ENCODE measurements at regions of chr11 and their contacts with region 1.

Region 1: GRCh38 chr11:30586251-30587144 is at the start of gene MPPED2:
- DNase-seq: peak; percentile 72 to 83
- ATAC-seq: peak; percentile 65
- H3K4me3 ChIP-seq: peak within 1 kb of the TSS; percentile 91 to 94
- H3K27ac ChIP-seq: peak within 1 kb of the TSS; percentile 78 to 90
- H3K4me1 ChIP-seq: no peaks in the 10 kb centered on the region
- H3K27me3 ChIP-seq: no peaks in the 10 kb centered on the region
- total RNA-seq, gene MPPED2: 7.5 to 20.4 TPM

Region 2: DNA sequence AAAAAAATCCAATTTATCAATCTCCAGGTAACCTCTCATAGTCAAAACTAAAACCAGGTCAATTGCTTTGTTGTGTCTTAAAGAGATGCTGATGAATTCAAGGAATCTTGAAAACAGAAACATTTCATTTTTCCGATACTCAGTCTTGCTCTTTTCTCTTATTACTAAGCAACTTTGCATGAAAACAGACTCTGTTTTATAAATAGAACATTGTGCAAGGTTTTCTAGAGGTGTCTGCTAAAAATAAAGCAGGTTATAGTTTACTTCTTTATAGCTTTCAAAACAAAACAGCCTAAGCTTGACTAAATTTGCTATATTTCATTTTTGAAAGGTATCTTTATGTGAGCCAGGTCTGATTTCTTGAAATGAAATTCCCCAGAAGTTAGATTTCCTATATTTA is 154.3 kb before region 1 on chr11:
- intact Hi-C with region 1: loop called (anchors 2 to 5 kb)
- DNase-seq: no peak
- ATAC-seq: peak; percentile 26
- H3K4me3 ChIP-seq: no peak overlapping the region
- H3K27ac ChIP-seq: peak overlapping the region in 1 of 2 donors; percentile 77
- H3K4me1 ChIP-seq: peaks cover 7 to 14% of the 10 kb centered on the region in 2 donors
- H3K27me3 ChIP-seq: no peaks in the 10 kb centered on the region

Region 3: DNA sequence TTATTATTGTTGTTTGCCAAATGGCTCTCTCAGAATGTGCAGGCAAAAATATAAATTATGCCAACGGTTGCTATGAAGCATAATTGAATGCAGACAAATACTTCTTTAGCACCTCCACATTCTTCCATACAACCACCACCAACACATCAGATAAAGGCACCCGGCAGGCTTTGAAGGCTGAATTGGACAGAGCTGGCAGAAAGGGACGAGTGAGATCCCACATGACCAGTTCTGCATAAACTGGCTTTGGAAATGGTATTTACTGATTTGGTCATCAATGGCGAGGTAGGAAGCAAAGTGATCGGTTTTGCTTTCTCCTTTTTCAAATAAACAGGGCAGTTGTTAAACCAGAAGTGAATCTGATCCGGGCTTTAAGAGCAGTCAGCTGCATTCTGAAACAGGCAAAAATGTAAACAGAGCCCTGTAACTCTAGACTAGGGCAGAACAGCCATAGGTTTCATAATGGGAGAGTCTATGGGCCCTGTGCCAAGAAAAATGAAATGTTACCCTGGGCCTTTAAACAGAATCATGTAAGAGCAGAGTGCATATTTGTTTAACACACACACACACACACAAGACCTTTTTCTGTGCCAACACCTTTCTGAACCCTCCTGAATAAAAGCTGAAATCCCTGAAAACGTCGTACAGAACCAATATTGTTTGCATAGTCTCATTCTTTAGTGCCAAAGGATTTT is 98.0 kb before region 1 on chr11:
- intact Hi-C with region 1: loop called in 1 of 2 experiments (anchors 5 kb)
- DNase-seq: no peak
- ATAC-seq: peak; percentile 65
- H3K4me3 ChIP-seq: no peak overlapping the region
- H3K27ac ChIP-seq: peak overlapping the region; percentile 12 to 90
- H3K4me1 ChIP-seq: peaks cover 0 to 7% of the 10 kb centered on the region in 2 donors
- H3K27me3 ChIP-seq: no peaks in the 10 kb centered on the region

Region 4: DNA sequence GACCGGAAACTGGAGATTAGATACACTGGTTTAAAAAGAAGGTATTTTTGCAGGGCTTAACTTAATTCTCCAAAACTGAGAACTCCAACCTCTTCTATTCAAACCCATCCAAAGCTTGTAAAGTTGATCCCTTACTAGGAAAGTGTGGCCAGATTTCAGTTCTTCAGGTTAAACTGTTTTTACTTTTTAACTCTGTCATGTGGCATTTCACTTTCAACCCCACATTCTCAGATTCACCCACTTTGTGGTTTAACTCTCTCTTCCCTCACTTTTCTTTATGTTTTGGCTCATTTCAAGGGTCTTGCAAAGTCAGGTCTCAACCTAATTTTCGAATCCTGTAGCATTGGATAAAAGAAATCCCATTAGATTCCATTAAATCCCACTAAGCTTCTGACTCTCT is 75.7 kb before region 1 on chr11:
- intact Hi-C with region 1: no loop called
- DNase-seq: no peak
- ATAC-seq: no peak
- H3K4me3 ChIP-seq: no peak overlapping the region
- H3K27ac ChIP-seq: no peak overlapping the region
- H3K4me1 ChIP-seq: peaks cover 0 to 2% of the 10 kb centered on the region in 2 donors
- H3K27me3 ChIP-seq: no peaks in the 10 kb centered on the region